T-cell (primary cell): ENCODE measurements at regions of chr1 and their contacts with region 1.

Region 1: GRCh38 chr1:26692793-26693490 is 2.9 kb upstream of the ARID1A start:
- DNase-seq: peak; percentile 70 to 93 (median 82)
- ATAC-seq: peak; percentile 32 to 38 (median 36)
- H3K4me3 ChIP-seq: peak overlapping the region; percentile 66 to 96
- H3K4me3 Mint-ChIP-seq: peak overlapping the region in 2 of 3 donors; percentile 92 to 94
- H3K27ac ChIP-seq: peak overlapping the region; percentile 79
- H3K27ac Mint-ChIP-seq: peak overlapping the region; percentile 93 to 97
- H3K4me1 ChIP-seq: peaks cover 18 to 34% of the 10 kb centered on the region in 2 experiments
- H3K4me1 Mint-ChIP-seq: peaks cover 31 to 38% (median 34%) of the 10 kb centered on the region in 3 donors
- H3K27me3 ChIP-seq: no peaks in the 10 kb centered on the region
- H3K27me3 Mint-ChIP-seq: no peaks in the 10 kb centered on the region

Region 2: DNA sequence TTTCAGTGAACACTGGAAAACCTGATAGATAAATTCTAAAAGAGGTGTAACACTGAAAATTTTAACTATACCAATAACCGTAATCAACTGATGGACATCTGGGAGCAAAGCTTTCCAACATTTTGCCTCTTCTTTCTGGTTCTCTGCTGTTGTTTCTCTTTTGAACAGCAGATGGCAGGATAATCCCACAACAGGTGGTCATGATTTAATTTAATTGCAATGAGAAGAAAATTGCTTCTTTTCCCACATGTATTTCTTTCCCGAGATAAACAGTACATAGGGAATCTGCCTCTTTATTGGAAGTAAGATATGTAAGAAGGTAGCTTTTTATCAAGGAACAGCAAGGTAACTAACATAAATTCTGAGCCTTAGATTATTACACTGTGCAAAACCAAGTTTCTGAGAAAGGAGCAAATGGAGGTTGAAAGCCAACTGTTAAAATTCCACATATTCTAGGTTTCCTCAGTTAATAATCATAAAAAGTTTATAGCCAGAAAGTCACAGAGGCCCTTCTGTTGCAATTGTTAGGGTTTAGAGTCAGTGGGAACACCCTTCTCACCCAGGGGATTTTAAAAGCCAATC is 90.5 kb before region 1 on chr1:
- CTCF ChIA-PET with region 1: interaction called, 8 to 16 read pairs
- POLR2A ChIA-PET with region 1: no interaction called
- DNase-seq: peak in 18 of 35 experiments; percentile 5 to 83 (median 22)
- ATAC-seq: peak in 2 of 4 experiments; percentile 48 to 55
- H3K4me3 ChIP-seq: no peak overlapping the region
- H3K4me3 Mint-ChIP-seq: no peak overlapping the region
- H3K27ac ChIP-seq: no peak overlapping the region
- H3K27ac Mint-ChIP-seq: no peak overlapping the region
- H3K4me1 ChIP-seq: peaks cover 0 to 5% of the 10 kb centered on the region in 2 experiments
- H3K4me1 Mint-ChIP-seq: peaks cover 4 to 9% (median 8%) of the 10 kb centered on the region in 3 donors
- H3K27me3 ChIP-seq: peaks cover 0 to 2% of the 10 kb centered on the region in 2 experiments
- H3K27me3 Mint-ChIP-seq: peaks cover 0 to 1% of the 10 kb centered on the region in 2 donors

Region 3: DNA sequence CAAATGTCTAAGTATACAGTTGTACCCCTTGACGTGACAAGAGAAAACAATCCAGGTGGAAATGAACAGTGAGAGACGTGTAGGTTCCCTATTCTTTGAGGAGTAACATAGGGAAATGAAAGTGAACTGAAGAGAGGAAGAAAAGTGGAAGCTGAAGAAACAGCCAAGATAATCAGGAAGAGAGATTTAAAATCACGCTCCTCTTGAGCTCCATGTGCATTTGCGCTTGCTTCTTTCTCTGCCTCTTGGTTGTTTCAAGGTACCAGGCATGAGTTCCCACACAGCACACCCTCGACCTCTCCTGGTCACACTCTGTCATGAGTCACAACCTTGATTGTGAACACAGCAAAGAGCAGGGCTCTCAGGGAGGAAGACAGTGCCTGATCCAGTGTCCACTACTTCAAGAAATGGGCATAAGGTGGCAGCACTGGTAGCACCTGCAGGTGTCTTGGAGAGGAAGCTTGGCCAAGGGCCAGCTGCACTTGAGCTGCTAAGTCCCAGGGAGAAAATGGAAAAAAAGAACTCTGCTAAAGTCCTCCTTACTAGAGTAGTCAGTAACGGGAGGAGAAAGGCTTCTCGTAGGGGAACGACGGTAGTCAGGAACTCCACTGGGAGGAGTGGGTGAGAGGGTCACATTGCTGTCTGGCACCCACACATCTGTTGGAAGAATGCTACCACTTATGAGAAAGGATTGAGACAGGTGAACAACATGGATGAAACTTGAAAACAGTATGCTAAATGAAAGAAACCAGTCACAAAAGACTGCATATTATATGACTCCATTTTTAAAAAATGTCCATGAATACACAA is 15.4 kb before region 1 on chr1:
- CTCF ChIA-PET with region 1: interaction called, 3 to 17 read pairs
- POLR2A ChIA-PET with region 1: interaction called in 1 of 2 experiments, 3 read pairs
- DNase-seq: peak; percentile 17 to 79 (median 43)
- ATAC-seq: peak; percentile 88 to 99 (median 94)
- H3K4me3 ChIP-seq: no peak overlapping the region
- H3K4me3 Mint-ChIP-seq: peak overlapping the region; percentile 37 to 58 (median 58)
- H3K27ac ChIP-seq: peak overlapping the region; percentile 38
- H3K27ac Mint-ChIP-seq: peak overlapping the region; percentile 80 to 81
- H3K4me1 ChIP-seq: peaks cover 7 to 8% of the 10 kb centered on the region in 2 experiments
- H3K4me1 Mint-ChIP-seq: peaks cover 18 to 20% (median 19%) of the 10 kb centered on the region in 3 donors
- H3K27me3 ChIP-seq: no peaks in the 10 kb centered on the region
- H3K27me3 Mint-ChIP-seq: no peaks in the 10 kb centered on the region

Region 4: GRCh38 chr1:26728645-26729044 is 35.7 kb after region 1 on chr1:
- CTCF ChIA-PET with region 1: interaction called in 1 of 2 experiments, 10 read pairs
- POLR2A ChIA-PET with region 1: interaction called, 4 to 5 read pairs
- DNase-seq: no peak
- ATAC-seq: no peak
- H3K4me3 ChIP-seq: no peak overlapping the region
- H3K4me3 Mint-ChIP-seq: peak overlapping the region in 1 of 3 donors; percentile 3
- H3K27ac ChIP-seq: peak overlapping the region; percentile 30
- H3K27ac Mint-ChIP-seq: peak overlapping the region; percentile 78 to 86
- H3K4me1 ChIP-seq: peaks cover 47 to 53% of the 10 kb centered on the region in 2 experiments
- H3K4me1 Mint-ChIP-seq: peaks cover 84 to 92% (median 90%) of the 10 kb centered on the region in 3 donors
- H3K27me3 ChIP-seq: no peaks in the 10 kb centered on the region
- H3K27me3 Mint-ChIP-seq: no peaks in the 10 kb centered on the region

Region 5: GRCh38 chr1:27203946-27204345 is 511.0 kb after region 1 on chr1:
- CTCF ChIA-PET with region 1: no interaction called
- POLR2A ChIA-PET with region 1: no interaction called
- DNase-seq: no peak
- ATAC-seq: no peak
- H3K4me3 ChIP-seq: no peak overlapping the region
- H3K4me3 Mint-ChIP-seq: no peak overlapping the region
- H3K27ac ChIP-seq: no peak overlapping the region
- H3K27ac Mint-ChIP-seq: no peak overlapping the region
- H3K4me1 ChIP-seq: no peaks in the 10 kb centered on the region
- H3K4me1 Mint-ChIP-seq: no peaks in the 10 kb centered on the region
- H3K27me3 ChIP-seq: peaks cover 0 to 4% of the 10 kb centered on the region in 2 experiments
- H3K27me3 Mint-ChIP-seq: no peaks in the 10 kb centered on the region